T-cell (primary cell): ENCODE measurements at regions of chr13 and their contacts with region 1.

Region 1: DNA sequence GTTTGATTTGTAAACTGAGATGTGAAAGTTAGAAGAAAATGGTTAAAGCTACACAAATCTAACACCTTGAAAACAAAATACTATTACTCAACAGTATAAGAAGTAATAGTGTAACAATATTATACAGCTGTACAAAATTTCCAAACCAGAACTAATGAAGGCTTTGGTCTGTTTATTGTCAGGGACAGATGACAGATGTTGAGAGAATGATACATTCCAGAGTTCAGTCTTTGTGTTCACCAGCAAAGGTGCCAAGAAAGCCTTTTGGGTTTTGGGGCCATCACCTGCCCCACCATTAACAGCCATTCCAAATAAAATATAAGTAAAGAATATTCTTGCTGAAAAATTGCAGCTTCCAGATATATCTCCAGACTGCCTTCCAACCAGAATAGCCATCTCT is 439.3 kb downstream of the PCDH20 start:
- DNase-seq: no peak
- ATAC-seq: no peak
- H3K4me3 ChIP-seq: no peak overlapping the region
- H3K4me3 Mint-ChIP-seq: no peak overlapping the region
- H3K27ac ChIP-seq: no peak overlapping the region
- H3K27ac Mint-ChIP-seq: no peak overlapping the region
- H3K4me1 ChIP-seq: no peaks in the 10 kb centered on the region
- H3K4me1 Mint-ChIP-seq: no peaks in the 10 kb centered on the region
- H3K27me3 ChIP-seq: no peaks in the 10 kb centered on the region
- H3K27me3 Mint-ChIP-seq: no peaks in the 10 kb centered on the region

Region 2: DNA sequence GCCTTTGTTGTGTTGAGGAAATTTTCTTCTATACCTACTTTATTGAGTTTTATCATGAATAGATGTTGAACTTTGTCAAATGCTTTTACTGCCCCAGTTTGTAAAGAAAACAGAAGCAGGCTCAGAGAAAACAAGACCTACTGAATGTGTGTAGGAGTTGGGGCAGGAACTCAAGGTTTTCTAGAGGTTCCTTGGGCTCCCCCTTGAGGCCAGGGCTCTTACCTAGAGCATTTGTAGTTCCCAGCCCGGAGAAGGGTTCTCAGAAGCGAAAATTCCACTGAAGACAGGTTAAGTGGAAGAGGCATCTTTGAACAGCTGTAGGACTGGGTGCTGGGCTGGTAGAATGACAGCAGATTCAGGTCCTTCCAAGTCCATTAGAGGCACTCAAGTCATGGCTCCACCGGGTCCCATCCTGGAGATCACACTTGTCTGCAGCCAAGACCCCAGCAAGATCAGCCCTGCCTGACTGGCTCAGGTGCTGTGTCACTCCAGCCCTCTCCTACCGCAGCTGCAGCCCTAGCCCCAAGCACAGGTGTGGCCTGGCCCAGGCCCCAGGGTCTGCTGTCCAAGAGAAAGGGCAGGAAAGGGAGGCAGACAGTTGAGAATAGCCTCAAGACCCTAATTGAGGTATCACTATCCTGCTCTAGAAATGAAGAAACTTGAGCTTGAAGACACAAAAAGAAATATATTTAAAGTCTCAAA is 13.8 kb after region 1 on chr13:
- CTCF ChIA-PET with region 1: no interaction called
- POLR2A ChIA-PET with region 1: interaction called in 1 of 2 experiments, 11 read pairs
- DNase-seq: no peak
- ATAC-seq: no peak
- H3K4me3 ChIP-seq: no peak overlapping the region
- H3K4me3 Mint-ChIP-seq: no peak overlapping the region
- H3K27ac ChIP-seq: no peak overlapping the region
- H3K27ac Mint-ChIP-seq: no peak overlapping the region
- H3K4me1 ChIP-seq: no peaks in the 10 kb centered on the region
- H3K4me1 Mint-ChIP-seq: no peaks in the 10 kb centered on the region
- H3K27me3 ChIP-seq: peaks cover 0 to 3% of the 10 kb centered on the region in 2 experiments
- H3K27me3 Mint-ChIP-seq: no peaks in the 10 kb centered on the region